Caco-2 (cell line): ENCODE measurements at regions of chr7 and their contacts with region 1.

Region 1: GRCh38 chr7:51606601-51607154 is 290.1 kb upstream of the COBL start:
- DNase-seq: peak; percentile 79 to 94
- H3K4me3 ChIP-seq: no peak overlapping the region
- H3K4me3 Mint-ChIP-seq: peak overlapping the region; percentile 59
- H3K27ac Mint-ChIP-seq: peak overlapping the region; percentile 88
- H3K4me1 ChIP-seq: peaks cover 28% of the 10 kb centered on the region
- H3K4me1 Mint-ChIP-seq: peaks cover 9% of the 10 kb centered on the region
- H3K27me3 ChIP-seq: no peaks in the 10 kb centered on the region
- H3K27me3 Mint-ChIP-seq: no peaks in the 10 kb centered on the region
- CTCF ChIP-seq: no peak

Region 2: GRCh38 chr7:51209426-51209825 is 397.3 kb before region 1 on chr7:
- CTCF ChIA-PET with region 1: no interaction called
- POLR2A ChIA-PET with region 1: no interaction called
- intact Hi-C with region 1: no loop called
- DNase-seq: no peak
- H3K4me3 ChIP-seq: no peak overlapping the region
- H3K4me3 Mint-ChIP-seq: peak overlapping the region; percentile 41
- H3K27ac Mint-ChIP-seq: peak overlapping the region; percentile 87
- H3K4me1 ChIP-seq: peaks cover 33% of the 10 kb centered on the region
- H3K4me1 Mint-ChIP-seq: peaks cover 16% of the 10 kb centered on the region
- H3K27me3 ChIP-seq: no peaks in the 10 kb centered on the region
- H3K27me3 Mint-ChIP-seq: no peaks in the 10 kb centered on the region
- CTCF ChIP-seq: no peak

Region 3: GRCh38 chr7:51376420-51377092 is 230.1 kb before region 1 on chr7:
- CTCF ChIA-PET with region 1: no interaction called
- POLR2A ChIA-PET with region 1: no interaction called
- intact Hi-C with region 1: loop called (anchors 2 kb)
- DNase-seq: peak; percentile 74 to 79
- H3K4me3 ChIP-seq: no peak overlapping the region
- H3K4me3 Mint-ChIP-seq: peak overlapping the region; percentile 22
- H3K27ac Mint-ChIP-seq: peak overlapping the region; percentile 66
- H3K4me1 ChIP-seq: peaks cover 18% of the 10 kb centered on the region
- H3K4me1 Mint-ChIP-seq: peaks cover 9% of the 10 kb centered on the region
- H3K27me3 ChIP-seq: no peaks in the 10 kb centered on the region
- H3K27me3 Mint-ChIP-seq: no peaks in the 10 kb centered on the region
- CTCF ChIP-seq: no peak

Region 4: DNA sequence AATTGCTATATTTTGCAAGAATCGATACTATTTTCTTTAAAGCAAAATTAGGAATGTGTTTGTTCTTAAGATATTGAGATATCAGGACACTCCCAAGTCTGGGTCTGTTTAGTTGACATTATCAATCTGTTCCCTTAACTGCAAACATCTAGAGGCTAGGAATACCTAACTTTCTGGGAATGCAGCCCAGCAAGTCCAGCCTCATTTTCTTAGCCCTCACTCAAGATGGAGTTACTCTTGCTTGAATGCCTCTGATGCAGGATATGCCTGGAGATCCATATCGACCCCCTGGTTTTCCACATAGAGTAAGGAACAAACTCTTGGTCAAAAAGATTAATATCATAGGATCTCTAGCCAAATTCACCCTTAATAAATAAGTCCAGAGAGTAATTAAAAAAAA is 15.3 kb after region 1 on chr7:
- CTCF ChIA-PET with region 1: no interaction called
- POLR2A ChIA-PET with region 1: no interaction called
- intact Hi-C with region 1: loop called (anchors 2 kb)
- DNase-seq: no peak
- H3K4me3 ChIP-seq: no peak overlapping the region
- H3K4me3 Mint-ChIP-seq: no peak overlapping the region
- H3K27ac Mint-ChIP-seq: no peak overlapping the region
- H3K4me1 ChIP-seq: peaks cover 41% of the 10 kb centered on the region
- H3K4me1 Mint-ChIP-seq: peaks cover 40% of the 10 kb centered on the region
- H3K27me3 ChIP-seq: no peaks in the 10 kb centered on the region
- H3K27me3 Mint-ChIP-seq: no peaks in the 10 kb centered on the region
- CTCF ChIP-seq: no peak

Region 5: DNA sequence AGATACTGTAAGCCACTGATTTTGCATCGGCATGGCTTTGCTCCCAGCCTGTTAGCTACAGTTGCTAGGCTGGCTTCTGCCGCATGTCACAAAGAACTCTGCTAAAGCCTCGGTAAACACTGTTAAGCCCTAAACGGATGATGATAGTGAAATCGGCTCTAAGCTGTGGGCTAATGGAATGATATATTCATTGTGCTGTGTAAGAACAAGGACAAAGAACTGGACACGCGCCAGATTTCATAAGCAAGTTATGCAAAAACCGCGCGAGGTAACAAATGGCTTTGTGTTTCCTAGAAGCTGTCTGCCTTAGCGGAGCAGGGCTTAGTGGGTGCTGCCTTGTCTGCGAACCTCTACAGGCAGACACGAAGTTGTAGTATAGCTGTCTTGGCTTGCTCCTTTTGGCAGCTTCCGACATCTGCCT is 41.3 kb after region 1 on chr7:
- CTCF ChIA-PET with region 1: no interaction called
- POLR2A ChIA-PET with region 1: no interaction called
- intact Hi-C with region 1: loop called (anchors 1 kb)
- DNase-seq: peak; percentile 82 to 83
- H3K4me3 ChIP-seq: peak overlapping the region; percentile 29
- H3K4me3 Mint-ChIP-seq: peak overlapping the region; percentile 56
- H3K27ac Mint-ChIP-seq: peak overlapping the region; percentile 64
- H3K4me1 ChIP-seq: peaks cover 15% of the 10 kb centered on the region
- H3K4me1 Mint-ChIP-seq: peaks cover 21% of the 10 kb centered on the region
- H3K27me3 ChIP-seq: no peaks in the 10 kb centered on the region
- H3K27me3 Mint-ChIP-seq: no peaks in the 10 kb centered on the region
- CTCF ChIP-seq: no peak

Region 6: GRCh38 chr7:51764976-51765375 is 158.3 kb after region 1 on chr7:
- CTCF ChIA-PET with region 1: no interaction called
- POLR2A ChIA-PET with region 1: no interaction called
- intact Hi-C with region 1: loop called (anchors 10 kb)
- DNase-seq: peak in 1 of 2 experiments; percentile 42
- H3K4me3 ChIP-seq: no peak overlapping the region
- H3K4me3 Mint-ChIP-seq: no peak overlapping the region
- H3K27ac Mint-ChIP-seq: no peak overlapping the region
- H3K4me1 ChIP-seq: 0 out of 2 replicates have a peak, but pooled peaks cover 6% of the 10 kb centered on the region
- H3K4me1 Mint-ChIP-seq: peaks cover 4% of the 10 kb centered on the region
- H3K27me3 ChIP-seq: no peaks in the 10 kb centered on the region
- H3K27me3 Mint-ChIP-seq: no peaks in the 10 kb centered on the region
- CTCF ChIP-seq: no peak

Region 7: DNA sequence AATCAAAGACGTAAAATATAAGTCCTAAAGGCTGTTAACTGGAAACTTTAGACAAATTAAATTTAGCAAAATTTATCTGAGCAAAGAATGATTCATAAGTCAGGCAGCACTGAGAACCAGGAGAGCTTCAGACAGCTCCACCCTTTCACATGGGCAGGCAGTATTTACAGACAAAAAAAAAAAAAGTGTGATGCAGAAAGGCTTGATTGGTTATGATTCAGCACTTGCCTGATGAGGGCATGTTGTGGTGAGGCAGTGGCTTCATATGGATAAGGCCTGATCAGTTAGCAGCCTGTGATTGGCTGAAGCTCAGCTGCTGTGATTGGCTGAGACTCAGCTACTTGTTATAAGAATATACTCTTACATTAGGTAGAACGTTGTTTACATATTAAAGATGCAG is 933.4 kb after region 1 on chr7:
- CTCF ChIA-PET with region 1: no interaction called
- POLR2A ChIA-PET with region 1: no interaction called
- intact Hi-C with region 1: loop called (anchors 10 kb)
- DNase-seq: no peak
- H3K4me3 ChIP-seq: no peak overlapping the region
- H3K4me3 Mint-ChIP-seq: no peak overlapping the region
- H3K27ac Mint-ChIP-seq: no peak overlapping the region
- H3K4me1 ChIP-seq: peaks cover 34% of the 10 kb centered on the region
- H3K4me1 Mint-ChIP-seq: peaks cover 13% of the 10 kb centered on the region
- H3K27me3 ChIP-seq: no peaks in the 10 kb centered on the region
- H3K27me3 Mint-ChIP-seq: no peaks in the 10 kb centered on the region
- CTCF ChIP-seq: no peak